Astrocyte of the cerebellum (primary cell): ENCODE measurements at regions of chr7 and their contacts with region 1.

Region 1: GRCh38 chr7:71735961-71736556 is 604.1 kb downstream of the GALNT17 start:
- DNase-seq: peak; percentile 47
- H3K4me3 ChIP-seq: no peak overlapping the region
- CTCF ChIP-seq: peak; percentile 94

Region 2: DNA sequence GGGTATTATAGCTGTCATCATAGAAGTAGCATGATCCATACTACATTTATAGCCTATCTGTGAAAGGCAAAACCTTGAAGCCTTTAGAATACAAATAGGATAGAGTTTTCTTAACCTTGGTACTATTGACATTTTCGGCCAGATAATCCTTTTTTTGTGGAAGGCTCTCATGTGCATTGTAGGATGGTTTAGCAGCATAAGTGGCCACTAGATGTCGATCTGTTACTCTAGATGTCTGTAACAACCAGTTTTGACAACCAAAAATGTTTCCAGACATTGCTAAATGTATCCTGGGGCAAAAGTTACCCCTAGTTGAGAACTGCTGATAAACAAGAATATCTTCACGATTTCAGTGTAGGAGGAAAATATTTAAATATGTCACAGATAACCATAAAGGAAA is 923.5 kb before region 1 on chr7:
- in situ Hi-C with region 1: loop called (anchors 5 kb)
- DNase-seq: no peak
- H3K4me3 ChIP-seq: no peak overlapping the region
- CTCF ChIP-seq: peak; percentile 46

Region 3: GRCh38 chr7:71695186-71695585 is 40.9 kb before region 1 on chr7:
- in situ Hi-C with region 1: no loop called
- DNase-seq: no peak
- H3K4me3 ChIP-seq: no peak overlapping the region
- CTCF ChIP-seq: no peak

Region 4: GRCh38 chr7:72058579-72058978 is 322.5 kb after region 1 on chr7:
- in situ Hi-C with region 1: no loop called
- DNase-seq: no peak
- H3K4me3 ChIP-seq: no peak overlapping the region
- CTCF ChIP-seq: no peak